Activated CD4-positive, alpha-beta memory T cell treated with anti-CD3 and anti-CD28 coated beads for 36 hours (primary cell): ENCODE measurements at regions of chr2 and their contacts with region 1.

Region 1: DNA sequence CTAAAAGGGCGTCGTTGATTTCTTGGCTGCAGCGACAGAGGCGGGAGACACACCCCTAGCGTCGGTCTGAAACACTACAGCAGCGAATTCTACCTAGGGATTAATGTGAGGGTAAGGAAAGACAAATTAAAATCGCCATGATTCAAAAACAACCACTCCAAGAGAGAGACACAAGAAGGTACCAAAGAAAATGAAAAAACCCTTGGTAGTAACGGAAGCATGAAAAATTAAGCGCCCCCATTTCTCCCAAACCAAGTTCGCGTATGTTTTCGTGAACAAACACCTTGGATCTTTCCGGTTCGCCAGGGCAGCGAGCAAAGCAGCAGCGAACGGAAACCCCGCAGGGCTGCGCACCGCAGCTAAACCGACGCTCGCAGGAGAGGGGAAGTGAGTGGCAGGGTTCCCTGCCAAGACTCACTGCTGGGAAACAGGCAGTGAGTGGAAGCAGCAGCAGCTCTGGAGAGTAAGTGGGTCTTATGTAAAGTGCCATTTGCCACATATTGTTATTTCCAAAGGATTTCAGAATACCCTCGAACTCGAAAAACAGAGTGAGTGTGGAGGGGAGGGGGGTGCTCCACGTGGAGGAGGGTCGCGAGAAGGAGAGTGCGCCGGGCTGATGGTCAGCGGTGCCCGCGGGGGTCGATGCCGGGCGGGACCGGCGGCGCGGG is 1.0 kb downstream of the PPP3R1 start:
- DNase-seq: peak; percentile 86
- H3K4me3 Mint-ChIP-seq: peak overlapping the region; percentile 86
- H3K27ac Mint-ChIP-seq: peak overlapping the region; percentile 97
- H3K4me1 Mint-ChIP-seq: peaks cover 35% of the 10 kb centered on the region
- H3K27me3 Mint-ChIP-seq: no peaks in the 10 kb centered on the region

Region 2: DNA sequence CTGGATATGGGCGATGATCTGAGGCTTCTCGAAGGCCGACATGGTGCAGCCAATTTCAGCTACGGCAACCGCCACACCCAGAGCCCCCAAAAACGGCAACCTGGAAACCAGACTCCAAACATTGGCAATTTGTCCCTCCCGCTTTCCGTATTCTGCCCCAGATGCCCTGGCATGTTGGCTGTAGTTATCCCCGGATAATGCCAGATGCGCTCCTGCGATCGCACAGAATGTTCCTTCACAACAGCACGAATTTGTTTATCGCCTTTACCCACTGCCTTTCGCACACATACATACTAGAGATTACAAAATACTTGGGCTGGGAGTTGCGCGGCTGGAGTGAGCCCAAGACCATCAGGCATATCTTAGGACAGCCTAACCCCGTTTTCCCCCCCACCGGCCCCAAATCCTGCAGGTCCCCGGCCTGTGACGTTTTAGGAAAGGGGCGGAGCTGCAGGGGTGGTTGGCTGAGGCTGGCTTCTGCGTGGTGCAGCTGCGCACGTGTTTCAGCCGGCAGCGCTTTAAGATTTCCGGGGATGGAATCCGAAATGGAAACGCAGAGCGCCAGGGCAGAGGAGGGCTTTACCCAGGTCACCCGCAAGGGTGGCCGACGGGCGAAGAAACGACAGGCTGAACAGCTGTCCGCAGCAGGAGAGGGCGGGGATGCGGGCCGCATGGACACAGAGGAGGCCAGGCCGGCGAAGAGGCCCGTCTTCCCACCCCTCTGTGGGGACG is 93.8 kb before region 1 on chr2 and contains the start of gene PNO1:
- CTCF ChIA-PET with region 1: interaction called, 9 read pairs
- POLR2A ChIA-PET with region 1: interaction called, 12 read pairs
- intact Hi-C with region 1: loop called (anchors 1 kb)
- DNase-seq: peak; percentile 98
- H3K4me3 Mint-ChIP-seq: peak within 1 kb of the TSS; percentile 95
- H3K27ac Mint-ChIP-seq: peak within 1 kb of the TSS; percentile 99
- H3K4me1 Mint-ChIP-seq: peaks cover 42% of the 10 kb centered on the region
- H3K27me3 Mint-ChIP-seq: no peaks in the 10 kb centered on the region
- total RNA-seq, gene PNO1: 16.3 to 16.4 TPM

Region 3: GRCh38 chr2:68203587-68203986 is 47.7 kb before region 1 on chr2:
- CTCF ChIA-PET with region 1: interaction called, 36 read pairs
- POLR2A ChIA-PET with region 1: interaction called, 3 read pairs
- intact Hi-C with region 1: loop called (anchors 1 kb)
- DNase-seq: no peak
- H3K4me3 Mint-ChIP-seq: peak overlapping the region; percentile 51
- H3K27ac Mint-ChIP-seq: peak overlapping the region; percentile 84
- H3K4me1 Mint-ChIP-seq: peaks cover 72% of the 10 kb centered on the region
- H3K27me3 Mint-ChIP-seq: no peaks in the 10 kb centered on the region

Region 4: GRCh38 chr2:68362069-68362468 is 110.7 kb after region 1 on chr2:
- CTCF ChIA-PET with region 1: no interaction called
- POLR2A ChIA-PET with region 1: no interaction called
- intact Hi-C with region 1: loop called (anchors 2 kb)
- DNase-seq: peak; percentile 87
- H3K4me3 Mint-ChIP-seq: peak overlapping the region; percentile 48
- H3K27ac Mint-ChIP-seq: no peak overlapping the region
- H3K4me1 Mint-ChIP-seq: peaks cover 12% of the 10 kb centered on the region
- H3K27me3 Mint-ChIP-seq: no peaks in the 10 kb centered on the region

Region 5: DNA sequence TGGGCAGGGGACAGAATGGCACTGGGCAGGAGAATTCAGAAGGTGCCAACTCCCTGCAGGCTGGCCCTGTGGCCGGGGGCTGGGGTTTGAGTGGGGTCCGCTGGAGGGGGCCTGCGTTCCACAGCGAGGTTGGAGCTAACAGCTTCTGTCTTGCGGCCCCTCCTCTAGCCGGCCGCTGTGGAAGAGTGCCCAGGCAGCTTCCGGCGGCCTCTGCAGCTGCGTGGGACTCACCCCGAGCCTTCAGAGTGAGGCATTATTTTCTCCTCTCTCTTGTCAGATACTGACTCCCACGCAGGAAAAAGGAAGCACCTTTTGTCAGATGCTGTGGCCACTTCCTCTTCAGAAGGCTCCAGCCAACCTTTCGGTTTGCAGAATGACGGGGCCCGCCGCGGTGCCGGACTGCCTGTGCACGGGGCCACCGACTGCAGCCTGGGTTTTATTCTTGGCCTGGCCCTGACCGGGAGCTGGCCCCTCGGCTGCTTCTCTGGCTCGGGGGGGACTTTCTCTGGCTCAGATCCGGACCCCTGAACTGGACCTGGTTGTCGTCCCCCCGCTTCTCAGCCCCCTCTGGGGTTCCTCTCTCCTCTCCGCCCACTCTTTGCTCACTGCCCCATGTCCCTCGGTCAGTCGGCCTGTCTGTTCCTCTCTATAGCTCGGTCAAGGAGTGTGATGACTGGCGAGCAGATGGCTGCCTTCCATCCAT is 523.4 kb after region 1 on chr2:
- CTCF ChIA-PET with region 1: no interaction called
- POLR2A ChIA-PET with region 1: no interaction called
- intact Hi-C with region 1: loop called (anchors 10 kb)
- DNase-seq: peak; percentile 83
- H3K4me3 Mint-ChIP-seq: peak overlapping the region; percentile 65
- H3K27ac Mint-ChIP-seq: peak overlapping the region; percentile 85
- H3K4me1 Mint-ChIP-seq: peaks cover 87% of the 10 kb centered on the region
- H3K27me3 Mint-ChIP-seq: no peaks in the 10 kb centered on the region